MCF 10A (cell line): ENCODE measurements at regions of chr3 and their contacts with region 1.

Region 1: GRCh38 chr3:182740710-182741109 is 52.6 kb upstream of the ATP11B start:
- DNase-seq: peak; percentile 57
- H3K4me3 Mint-ChIP-seq: no peak overlapping the region
- H3K27ac Mint-ChIP-seq: no peak overlapping the region
- H3K4me1 Mint-ChIP-seq: peaks cover 8% of the 10 kb centered on the region
- H3K27me3 Mint-ChIP-seq: peaks cover 9% of the 10 kb centered on the region
- CTCF ChIP-seq: no peak

Region 2: DNA sequence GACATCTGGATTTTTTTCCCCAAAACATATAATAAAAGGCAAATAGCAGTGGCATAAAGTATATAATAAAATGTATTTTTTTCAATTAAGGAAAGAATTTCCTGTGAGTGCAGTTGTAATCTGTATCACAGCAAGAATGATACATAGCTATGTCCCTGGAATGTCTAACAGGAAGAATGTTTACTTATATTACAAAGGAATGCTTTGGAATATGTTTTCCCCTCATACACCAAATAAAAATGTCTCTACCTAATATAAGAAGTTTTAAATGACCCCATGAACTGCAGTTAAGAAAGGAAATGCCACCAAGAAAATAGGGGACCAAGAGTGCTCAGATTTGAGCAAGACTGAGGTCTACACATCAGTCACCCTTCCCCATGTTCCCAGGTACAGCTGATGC is 14.6 kb after region 1 on chr3:
- CTCF ChIA-PET with region 1: interaction called, 4 read pairs
- POLR2A ChIA-PET with region 1: interaction called, 10 read pairs
- intact Hi-C with region 1: no loop called
- DNase-seq: no peak
- H3K4me3 Mint-ChIP-seq: no peak overlapping the region
- H3K27ac Mint-ChIP-seq: no peak overlapping the region
- H3K4me1 Mint-ChIP-seq: peaks cover 7% of the 10 kb centered on the region
- H3K27me3 Mint-ChIP-seq: no peaks in the 10 kb centered on the region
- CTCF ChIP-seq: no peak